Activated naive CD4-positive, alpha-beta T cell treated with anti-CD3 and anti-CD28 coated beads for 36 hours (primary cell): ENCODE measurements at regions of chr17 and their contacts with region 1.

Region 1: GRCh38 chr17:53234138-53234537 is 588.6 kb upstream of the KIF2B start:
- DNase-seq: no peak
- H3K4me3 Mint-ChIP-seq: no peak overlapping the region
- H3K27ac Mint-ChIP-seq: no peak overlapping the region
- H3K4me1 Mint-ChIP-seq: no peaks in the 10 kb centered on the region
- H3K27me3 Mint-ChIP-seq: no peaks in the 10 kb centered on the region

Region 2: GRCh38 chr17:53186001-53186400 is 48.1 kb before region 1 on chr17:
- CTCF ChIA-PET with region 1: no interaction called
- intact Hi-C with region 1: no loop called
- DNase-seq: no peak
- H3K4me3 Mint-ChIP-seq: no peak overlapping the region
- H3K27ac Mint-ChIP-seq: no peak overlapping the region
- H3K4me1 Mint-ChIP-seq: no peaks in the 10 kb centered on the region
- H3K27me3 Mint-ChIP-seq: no peaks in the 10 kb centered on the region

Region 3: GRCh38 chr17:53218723-53219122 is 15.4 kb before region 1 on chr17:
- CTCF ChIA-PET with region 1: no interaction called
- intact Hi-C with region 1: loop called (anchors 1 kb)
- DNase-seq: no peak
- H3K4me3 Mint-ChIP-seq: no peak overlapping the region
- H3K27ac Mint-ChIP-seq: no peak overlapping the region
- H3K4me1 Mint-ChIP-seq: no peaks in the 10 kb centered on the region
- H3K27me3 Mint-ChIP-seq: no peaks in the 10 kb centered on the region